ENCODE measurements at regions of chr3 and their contacts with region 1.

Region 1: DNA sequence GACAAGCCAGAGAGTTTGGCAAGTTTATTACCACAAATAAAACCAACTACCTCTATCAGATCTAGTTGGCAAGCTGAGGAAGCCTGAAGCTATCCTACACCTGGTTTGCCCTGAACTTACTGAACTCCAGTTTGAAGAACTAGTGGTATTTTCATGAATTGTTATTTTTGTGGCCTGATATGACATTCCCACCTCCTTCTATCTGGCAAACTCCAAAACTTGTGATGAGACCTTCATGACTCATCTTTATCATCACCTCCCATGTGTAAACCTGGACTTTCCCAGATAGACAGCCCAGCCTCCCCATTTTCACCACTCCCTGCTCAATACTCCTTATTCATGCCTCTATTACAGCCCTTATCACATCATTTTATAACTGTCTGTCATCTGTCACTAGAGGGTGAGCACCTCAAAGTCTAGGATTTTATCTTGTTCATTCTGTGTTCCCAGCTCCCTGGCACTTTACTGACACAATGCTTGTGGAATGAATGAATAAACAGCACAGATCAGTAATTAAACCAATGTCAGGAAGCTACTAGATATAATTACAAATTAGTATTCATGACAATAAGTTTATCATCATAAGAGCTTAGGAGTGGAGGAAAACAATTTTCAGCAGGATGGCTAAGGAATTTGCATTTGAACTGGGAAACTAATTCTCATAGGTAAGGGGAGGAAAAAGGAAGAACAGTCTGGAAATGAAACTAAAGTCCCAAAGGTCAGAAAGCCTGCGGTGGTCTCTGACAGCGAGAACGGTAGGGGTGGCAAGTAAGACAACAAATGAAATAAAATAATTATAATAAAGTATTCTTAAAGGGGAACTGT is 13.2 kb upstream of the TRANK1 start:
- DNase-seq: no peak
- H3K4me3 Mint-ChIP-seq: no peak overlapping the region
- H3K27ac Mint-ChIP-seq: peak overlapping the region; percentile 25
- H3K4me1 Mint-ChIP-seq: peaks cover 12% of the 10 kb centered on the region
- H3K27me3 Mint-ChIP-seq: peaks cover 8% of the 10 kb centered on the region

Region 2: GRCh38 chr3:36792342-36792741 is 165.7 kb before region 1 on chr3:
- intact Hi-C with region 1: loop called (anchors 1 kb)
- DNase-seq: no peak
- H3K4me3 Mint-ChIP-seq: no peak overlapping the region
- H3K27ac Mint-ChIP-seq: no peak overlapping the region
- H3K4me1 Mint-ChIP-seq: no peaks in the 10 kb centered on the region
- H3K27me3 Mint-ChIP-seq: peaks cover 17% of the 10 kb centered on the region

Region 3: DNA sequence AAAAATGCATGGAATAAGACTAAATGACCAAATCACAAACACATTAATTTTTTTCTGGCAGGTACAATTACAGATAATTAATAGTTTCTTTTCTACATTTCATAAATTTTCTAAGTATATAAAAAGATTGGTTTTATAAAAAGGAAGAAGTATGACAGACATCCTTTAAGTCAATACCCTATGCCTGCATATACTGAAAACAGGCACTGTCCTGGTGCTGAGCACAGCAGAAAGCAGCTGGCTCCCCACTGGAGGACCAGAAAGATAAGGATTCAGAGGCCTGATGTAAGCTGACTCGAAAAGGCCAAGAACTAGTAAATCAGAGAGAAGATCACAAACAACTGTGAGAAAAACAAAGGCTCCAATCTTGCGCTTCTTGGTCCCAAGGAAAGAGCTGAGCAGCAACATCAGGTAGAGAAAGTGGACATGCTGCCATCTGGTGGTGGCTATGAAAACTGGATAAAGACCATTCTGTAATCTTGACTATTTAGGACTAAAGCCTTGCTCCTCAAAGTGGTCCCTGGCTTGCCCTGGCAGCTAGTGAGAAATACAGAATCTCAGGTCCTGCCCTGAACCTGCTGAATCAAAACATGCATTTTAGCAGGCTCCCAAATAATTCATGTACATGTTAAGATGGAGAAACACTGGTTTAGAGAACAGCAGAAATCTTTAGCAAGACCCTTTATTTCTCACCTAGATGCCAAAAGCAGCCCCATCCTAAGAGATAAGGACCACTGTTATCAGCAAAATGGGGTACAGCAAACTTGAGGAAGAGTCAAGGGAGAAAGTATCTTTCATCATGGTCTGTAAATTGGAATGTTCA is 89.2 kb before region 1 on chr3:
- intact Hi-C with region 1: loop called (anchors 1 kb)
- DNase-seq: peak; percentile 24
- H3K4me3 Mint-ChIP-seq: no peak overlapping the region
- H3K27ac Mint-ChIP-seq: no peak overlapping the region
- H3K4me1 Mint-ChIP-seq: peaks cover 11% of the 10 kb centered on the region
- H3K27me3 Mint-ChIP-seq: peaks cover 6% of the 10 kb centered on the region

Region 4: GRCh38 chr3:36911990-36912804 is 45.9 kb before region 1 on chr3:
- intact Hi-C with region 1: loop called (anchors 1 kb)
- DNase-seq: peak; percentile 40
- H3K4me3 Mint-ChIP-seq: peak overlapping the region; percentile 19
- H3K27ac Mint-ChIP-seq: peak overlapping the region; percentile 41
- H3K4me1 Mint-ChIP-seq: peaks cover 40% of the 10 kb centered on the region
- H3K27me3 Mint-ChIP-seq: no peaks in the 10 kb centered on the region

Measured in activated T-helper 1 cell treated with anti-CD3 and anti-CD28 coated beads, Interleukin-12 subunit alpha, Interleukin-12 subunit beta, Interleukin-2, Interleukin-4 antibody, amounts not matched to agents 30 ng/mL and 10 ng/mL and 1 ng/mL, durations not matched to agents 14 hours and 24 hours and 36 hours (primary cell).